ENCODE measurements at regions of chr7 and their contacts with region 1.

Region 1: DNA sequence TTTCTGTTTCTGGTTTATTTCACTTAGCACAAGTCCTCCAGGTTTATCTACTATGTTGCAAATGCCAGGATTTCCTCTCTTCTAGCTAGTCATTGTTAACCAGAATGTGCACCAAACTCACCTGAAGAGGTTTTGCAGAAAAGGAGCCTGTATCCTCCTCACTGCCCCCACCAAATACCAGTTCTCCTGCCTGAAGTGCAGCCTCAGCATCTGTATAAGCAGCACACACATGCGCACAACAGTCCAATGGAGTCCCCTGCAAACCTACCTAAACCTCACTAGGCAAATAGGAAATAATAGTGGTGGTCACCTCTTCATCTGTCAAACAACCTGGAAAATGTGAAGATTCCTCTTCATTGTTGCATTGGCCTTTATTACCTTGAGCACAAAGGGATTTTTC is 237.8 kb downstream of the PAXIP1 start:
- DNase-seq: no peak
- H3K4me3 ChIP-seq: no peak overlapping the region
- H3K27ac ChIP-seq: no peak overlapping the region
- H3K4me1 ChIP-seq: no peaks in the 10 kb centered on the region
- H3K27me3 ChIP-seq: no peaks in the 10 kb centered on the region
- CTCF ChIP-seq: no peak
- EP300 ChIP-seq: no peak
- POLR2A ChIP-seq: no peak

Region 2: DNA sequence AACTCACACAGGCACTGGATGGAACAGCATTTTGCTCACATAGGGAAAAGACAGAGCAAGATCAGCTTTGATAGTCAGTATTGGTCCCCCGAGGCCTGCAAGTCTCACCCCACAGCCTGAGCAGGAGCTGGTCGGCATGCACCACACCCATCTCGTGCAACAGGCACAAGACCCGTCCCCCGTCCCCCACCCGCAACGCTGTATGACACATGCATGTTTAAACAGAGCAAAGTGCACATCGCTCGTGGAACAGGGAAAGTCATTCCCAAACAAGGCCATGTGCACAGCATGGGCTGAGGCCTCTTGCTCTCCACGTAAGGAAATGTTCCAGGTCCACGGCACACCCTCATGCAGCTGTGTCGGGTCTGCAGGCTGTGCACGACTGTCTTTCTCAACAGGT is 1478.4 kb before region 1 on chr7:
- intact Hi-C with region 1: no loop called
- DNase-seq: no peak
- H3K4me3 ChIP-seq: no peak overlapping the region
- H3K27ac ChIP-seq: no peak overlapping the region
- H3K4me1 ChIP-seq: no peaks in the 10 kb centered on the region
- H3K27me3 ChIP-seq: no peaks in the 10 kb centered on the region
- CTCF ChIP-seq: no peak
- EP300 ChIP-seq: no peak
- POLR2A ChIP-seq: no peak

Region 3: DNA sequence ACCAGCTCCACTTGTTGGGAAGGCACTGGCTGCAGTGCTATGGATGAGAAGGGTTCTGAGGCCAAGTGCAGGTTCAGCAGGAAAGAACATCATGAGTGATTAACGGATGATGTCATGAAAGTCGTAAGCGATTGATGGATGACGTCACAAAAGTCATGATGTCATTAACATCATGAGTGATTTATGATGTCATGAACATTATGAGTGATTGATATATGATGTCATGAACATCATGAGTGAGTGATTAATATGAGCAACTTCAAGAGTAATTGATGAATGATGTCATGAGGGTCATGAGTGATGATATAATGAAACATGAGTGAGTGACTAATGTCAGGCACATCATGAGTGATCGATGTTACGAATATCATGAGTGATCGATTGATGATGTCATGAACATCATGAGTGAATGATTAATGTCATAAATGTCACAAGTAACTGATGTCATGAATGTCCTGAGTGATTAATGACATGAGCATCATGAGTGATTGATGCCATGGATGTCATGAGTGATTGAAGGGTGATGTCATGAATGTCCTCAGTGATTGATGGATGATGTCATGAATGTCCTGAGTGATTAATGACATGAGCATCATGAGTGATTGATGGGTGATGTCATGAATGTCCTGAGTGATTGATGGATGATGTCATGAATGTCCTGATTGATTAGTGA is 52.2 kb after region 1 on chr7:
- intact Hi-C with region 1: loop called in 1 of 4 experiments (anchors 2 kb)
- DNase-seq: no peak
- H3K4me3 ChIP-seq: no peak overlapping the region
- H3K27ac ChIP-seq: no peak overlapping the region
- H3K4me1 ChIP-seq: no peaks in the 10 kb centered on the region
- H3K27me3 ChIP-seq: no peaks in the 10 kb centered on the region
- CTCF ChIP-seq: no peak
- EP300 ChIP-seq: no peak
- POLR2A ChIP-seq: no peak

Region 4: DNA sequence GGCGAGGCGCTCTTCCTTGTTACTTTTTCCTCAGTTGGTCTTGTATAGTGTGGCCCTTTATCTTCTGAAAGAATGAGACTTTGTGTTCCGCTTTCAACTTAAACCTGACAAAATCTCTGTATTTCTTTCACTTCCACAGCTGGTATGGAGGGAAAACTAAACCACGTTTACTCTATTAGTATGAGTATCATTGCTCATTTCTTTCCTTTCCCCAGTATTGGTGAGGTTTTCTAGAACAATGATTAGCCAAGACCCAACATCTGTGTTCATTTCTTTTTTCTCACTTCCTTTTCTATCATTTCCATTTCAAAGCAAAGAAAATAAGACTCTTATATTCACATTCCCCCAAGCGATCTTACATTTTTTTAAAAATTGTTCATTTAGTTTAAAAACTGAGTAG is 72.5 kb after region 1 on chr7:
- intact Hi-C with region 1: no loop called
- DNase-seq: no peak
- H3K4me3 ChIP-seq: no peak overlapping the region
- H3K27ac ChIP-seq: no peak overlapping the region
- H3K4me1 ChIP-seq: no peaks in the 10 kb centered on the region
- H3K27me3 ChIP-seq: no peaks in the 10 kb centered on the region
- CTCF ChIP-seq: no peak
- EP300 ChIP-seq: no peak
- POLR2A ChIP-seq: no peak

Measured in ovary (tissue), 10 donors.